GM10248 (cell line): ENCODE measurements at regions of chr11 and their contacts with region 1.

Region 1: GRCh38 chr11:14907411-14908213 is 15.6 kb upstream of the CYP2R1 start:
- DNase-seq: no peak
- CTCF ChIP-seq: peak; percentile 88

Region 2: DNA sequence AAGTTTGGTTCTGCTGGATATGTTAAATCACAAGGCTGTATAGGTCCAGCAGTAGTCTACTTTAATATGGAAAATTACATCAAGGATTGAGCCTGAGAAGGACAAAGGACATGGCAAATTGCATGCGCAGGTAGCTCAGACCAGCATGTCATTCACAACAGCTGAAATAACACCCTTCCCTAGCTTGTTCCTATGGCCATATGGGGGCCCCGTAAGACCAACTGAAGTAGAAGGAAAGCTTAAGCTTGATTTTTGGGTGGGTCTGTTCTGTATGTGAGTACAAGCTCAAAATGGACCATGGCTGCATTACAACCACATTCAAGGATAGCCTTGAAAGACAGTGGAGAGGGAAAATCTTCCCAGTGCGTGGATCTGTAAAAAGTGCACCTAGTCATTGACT is 284.6 kb before region 1 on chr11:
- CTCF ChIA-PET with region 1: interaction called, 14 read pairs
- POLR2A ChIA-PET with region 1: no interaction called
- DNase-seq: no peak
- CTCF ChIP-seq: no peak

Region 3: DNA sequence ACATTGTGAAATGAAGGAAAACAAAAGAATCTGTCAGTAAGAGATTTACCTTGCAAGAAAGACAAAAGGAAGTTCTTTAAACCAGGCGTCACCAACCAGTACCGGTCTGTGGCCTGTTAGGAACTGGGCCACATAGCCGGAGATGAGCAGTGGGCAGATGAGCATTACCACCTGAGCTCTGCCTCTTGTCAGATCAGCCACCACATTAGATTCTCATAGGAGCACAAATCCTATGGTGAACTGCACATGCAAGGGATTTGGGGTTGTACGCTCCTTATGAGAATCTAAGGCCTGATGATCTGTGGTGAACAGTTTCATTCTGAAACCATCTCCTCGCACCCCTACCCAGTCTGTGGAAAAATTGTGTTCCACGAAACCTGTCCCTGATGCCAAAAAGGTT is 123.8 kb before region 1 on chr11:
- CTCF ChIA-PET with region 1: interaction called, 213 read pairs
- POLR2A ChIA-PET with region 1: no interaction called
- DNase-seq: no peak
- CTCF ChIP-seq: no peak

Region 4: DNA sequence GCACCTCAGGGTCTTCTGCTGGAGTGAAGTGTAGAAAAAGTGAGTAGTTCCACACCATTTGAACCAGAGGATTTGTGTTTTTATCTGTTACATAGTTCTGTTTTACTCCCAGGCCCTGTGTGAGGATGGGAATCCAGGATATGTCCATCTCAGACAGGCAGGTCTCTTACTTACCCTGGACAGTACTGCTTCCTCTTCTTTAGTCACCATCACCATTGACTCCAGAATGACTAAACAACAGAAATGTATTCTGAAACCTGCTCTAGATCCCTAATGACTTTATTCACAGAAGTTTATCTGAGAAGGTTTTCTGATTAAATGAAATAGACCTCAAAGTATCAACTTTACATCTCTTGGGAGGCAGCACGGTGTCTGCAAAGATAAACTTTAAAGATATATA is 49.2 kb before region 1 on chr11:
- CTCF ChIA-PET with region 1: interaction called, 12 read pairs
- POLR2A ChIA-PET with region 1: no interaction called
- DNase-seq: no peak
- CTCF ChIP-seq: no peak

Region 5: GRCh38 chr11:14942745-14943144 is 35.1 kb after region 1 on chr11:
- CTCF ChIA-PET with region 1: interaction called, 14 read pairs
- POLR2A ChIA-PET with region 1: no interaction called
- DNase-seq: no peak
- CTCF ChIP-seq: no peak

Region 6: DNA sequence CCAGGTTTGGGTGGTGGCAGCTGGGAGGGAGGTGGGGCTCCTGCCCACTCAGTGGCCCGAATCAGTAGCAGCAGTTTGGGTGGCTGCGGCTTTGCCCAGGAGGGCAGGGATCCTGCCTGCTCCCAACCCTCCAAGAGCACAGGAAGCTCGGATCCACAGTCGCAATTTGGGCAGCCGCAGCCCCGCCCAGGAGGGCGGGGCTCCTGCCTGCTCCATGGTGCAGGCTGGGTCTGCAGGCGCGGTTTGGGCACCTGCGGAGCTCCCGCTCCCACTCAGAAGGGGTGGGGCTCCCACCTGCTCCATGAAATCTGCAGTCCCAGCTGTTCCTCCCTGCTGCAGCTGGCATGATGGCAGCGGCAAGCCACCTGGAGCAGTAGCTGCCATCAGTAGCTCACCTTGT is 127.7 kb after region 1 on chr11:
- CTCF ChIA-PET with region 1: no interaction called
- POLR2A ChIA-PET with region 1: no interaction called
- DNase-seq: no peak
- CTCF ChIP-seq: no peak

Region 7: GRCh38 chr11:15101072-15101709 is 193.6 kb after region 1 on chr11:
- CTCF ChIA-PET with region 1: interaction called, 24 read pairs
- POLR2A ChIA-PET with region 1: no interaction called
- DNase-seq: peak; percentile 49
- CTCF ChIP-seq: peak; percentile 90